Natural killer cell (primary cell): ENCODE measurements at regions of chr20 and their contacts with region 1.

Region 1: GRCh38 chr20:18632196-18633009 is 44.5 kb downstream of the DTD1 start:
- DNase-seq: peak; percentile 40 to 61
- ATAC-seq: peak; percentile 85 to 89 (median 89)
- H3K4me3 ChIP-seq: no peak overlapping the region
- H3K4me3 Mint-ChIP-seq: no peak overlapping the region
- H3K27ac ChIP-seq: no peak overlapping the region
- H3K27ac Mint-ChIP-seq: no peak overlapping the region
- H3K4me1 ChIP-seq: no peaks in the 10 kb centered on the region
- H3K4me1 Mint-ChIP-seq: peaks cover 0 to 6% of the 10 kb centered on the region in 2 donors
- H3K27me3 ChIP-seq: no peaks in the 10 kb centered on the region
- H3K27me3 Mint-ChIP-seq: no peaks in the 10 kb centered on the region
- CTCF ChIP-seq: peak; percentile 83

Region 2: DNA sequence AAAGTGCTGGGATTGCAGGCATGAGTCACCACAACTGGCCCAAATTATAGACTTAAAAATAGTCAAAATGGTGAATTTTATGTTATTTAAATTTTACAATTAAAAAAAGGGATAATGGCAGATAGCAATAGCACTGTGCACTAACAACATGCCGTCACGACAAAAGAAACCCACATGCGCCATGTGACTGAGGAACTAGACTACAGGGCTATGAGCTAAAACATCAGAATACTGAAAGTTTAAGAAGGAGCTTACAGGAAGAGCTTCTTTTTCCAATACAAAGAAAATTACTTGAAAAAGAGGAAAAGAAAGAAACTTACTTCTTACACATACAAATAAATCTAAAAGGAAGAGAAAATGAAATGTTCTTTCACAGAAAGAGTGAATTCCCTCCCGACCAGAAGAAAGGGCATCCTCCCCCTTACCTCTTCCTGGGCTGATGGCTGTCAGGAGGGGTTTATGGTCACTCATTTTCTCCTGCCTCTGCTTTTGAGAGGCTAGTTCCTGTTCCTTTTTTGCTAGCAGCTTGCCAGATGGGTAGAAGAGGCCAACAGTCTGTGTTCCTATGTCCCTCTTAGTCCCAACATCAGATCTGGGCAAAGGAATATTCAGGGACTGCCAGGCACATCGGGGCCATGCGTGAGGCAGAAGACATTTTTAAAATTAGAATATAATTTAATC is 220.0 kb before region 1 on chr20:
- intact Hi-C with region 1: loop called (anchors 5 kb)
- DNase-seq: no peak
- ATAC-seq: no peak
- H3K4me3 ChIP-seq: no peak overlapping the region
- H3K4me3 Mint-ChIP-seq: no peak overlapping the region
- H3K27ac ChIP-seq: no peak overlapping the region
- H3K27ac Mint-ChIP-seq: no peak overlapping the region
- H3K4me1 ChIP-seq: no peaks in the 10 kb centered on the region
- H3K4me1 Mint-ChIP-seq: peaks cover 5% of the 10 kb centered on the region in 2 donors
- H3K27me3 ChIP-seq: no peaks in the 10 kb centered on the region
- H3K27me3 Mint-ChIP-seq: no peaks in the 10 kb centered on the region
- CTCF ChIP-seq: no peak

Region 3: DNA sequence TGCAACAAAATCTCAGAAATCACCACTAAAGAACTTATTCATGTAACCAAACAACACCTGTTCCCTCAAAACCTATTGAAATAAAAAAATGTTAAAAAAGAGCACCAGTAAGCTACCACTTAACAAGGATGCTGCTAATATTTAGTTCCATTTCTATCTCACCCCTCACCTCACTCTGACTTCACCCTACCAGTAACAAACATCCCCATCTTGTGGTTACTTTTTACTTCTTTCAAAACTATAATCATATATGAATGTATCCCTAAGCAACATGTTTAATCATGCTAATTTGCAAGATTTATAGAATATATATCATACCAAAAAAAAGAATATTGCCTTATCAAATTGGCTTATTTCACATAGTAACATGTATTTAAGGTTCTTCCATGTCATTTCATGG is 552.7 kb after region 1 on chr20:
- intact Hi-C with region 1: loop called (anchors 2 kb)
- DNase-seq: no peak
- ATAC-seq: peak in 1 of 3 donors; percentile 40
- H3K4me3 ChIP-seq: no peak overlapping the region
- H3K4me3 Mint-ChIP-seq: no peak overlapping the region
- H3K27ac ChIP-seq: no peak overlapping the region
- H3K27ac Mint-ChIP-seq: no peak overlapping the region
- H3K4me1 ChIP-seq: no peaks in the 10 kb centered on the region
- H3K4me1 Mint-ChIP-seq: no peaks in the 10 kb centered on the region
- H3K27me3 ChIP-seq: no peaks in the 10 kb centered on the region
- H3K27me3 Mint-ChIP-seq: no peaks in the 10 kb centered on the region
- CTCF ChIP-seq: peak; percentile 17

Region 4: GRCh38 chr20:19249106-19249879 is 616.9 kb after region 1 on chr20:
- intact Hi-C with region 1: loop called (anchors 5 kb)
- DNase-seq: peak in 1 of 2 donors; percentile 4
- ATAC-seq: peak in 1 of 3 donors; percentile 63
- H3K4me3 ChIP-seq: no peak overlapping the region
- H3K4me3 Mint-ChIP-seq: no peak overlapping the region
- H3K27ac ChIP-seq: no peak overlapping the region
- H3K27ac Mint-ChIP-seq: no peak overlapping the region
- H3K4me1 ChIP-seq: no peaks in the 10 kb centered on the region
- H3K4me1 Mint-ChIP-seq: no peaks in the 10 kb centered on the region
- H3K27me3 ChIP-seq: no peaks in the 10 kb centered on the region
- H3K27me3 Mint-ChIP-seq: peaks cover 7 to 9% of the 10 kb centered on the region in 2 donors
- CTCF ChIP-seq: no peak

Region 5: GRCh38 chr20:19583532-19584175 is 951.3 kb after region 1 on chr20:
- intact Hi-C with region 1: loop called (anchors 5 kb)
- DNase-seq: peak; percentile 40 to 41
- ATAC-seq: peak; percentile 57 to 84 (median 68)
- H3K4me3 ChIP-seq: no peak overlapping the region
- H3K4me3 Mint-ChIP-seq: no peak overlapping the region
- H3K27ac ChIP-seq: no peak overlapping the region
- H3K27ac Mint-ChIP-seq: no peak overlapping the region
- H3K4me1 ChIP-seq: no peaks in the 10 kb centered on the region
- H3K4me1 Mint-ChIP-seq: no peaks in the 10 kb centered on the region
- H3K27me3 ChIP-seq: no peaks in the 10 kb centered on the region
- H3K27me3 Mint-ChIP-seq: no peaks in the 10 kb centered on the region
- CTCF ChIP-seq: peak; percentile 45

Region 6: GRCh38 chr20:19661717-19662636 is 1029.6 kb after region 1 on chr20:
- intact Hi-C with region 1: loop called (anchors 2 kb)
- DNase-seq: peak; percentile 21 to 66
- ATAC-seq: peak; percentile 49 to 81 (median 68)
- H3K4me3 ChIP-seq: no peak overlapping the region
- H3K4me3 Mint-ChIP-seq: no peak overlapping the region
- H3K27ac ChIP-seq: no peak overlapping the region
- H3K27ac Mint-ChIP-seq: no peak overlapping the region
- H3K4me1 ChIP-seq: peaks cover 8% of the 10 kb centered on the region
- H3K4me1 Mint-ChIP-seq: peaks cover 4 to 8% of the 10 kb centered on the region in 2 donors
- H3K27me3 ChIP-seq: peaks cover 2% of the 10 kb centered on the region
- H3K27me3 Mint-ChIP-seq: peaks cover 14 to 31% of the 10 kb centered on the region in 2 donors
- CTCF ChIP-seq: peak; percentile 97